ENCODE measurements at regions of chr16 and their contacts with region 1.

Region 1: DNA sequence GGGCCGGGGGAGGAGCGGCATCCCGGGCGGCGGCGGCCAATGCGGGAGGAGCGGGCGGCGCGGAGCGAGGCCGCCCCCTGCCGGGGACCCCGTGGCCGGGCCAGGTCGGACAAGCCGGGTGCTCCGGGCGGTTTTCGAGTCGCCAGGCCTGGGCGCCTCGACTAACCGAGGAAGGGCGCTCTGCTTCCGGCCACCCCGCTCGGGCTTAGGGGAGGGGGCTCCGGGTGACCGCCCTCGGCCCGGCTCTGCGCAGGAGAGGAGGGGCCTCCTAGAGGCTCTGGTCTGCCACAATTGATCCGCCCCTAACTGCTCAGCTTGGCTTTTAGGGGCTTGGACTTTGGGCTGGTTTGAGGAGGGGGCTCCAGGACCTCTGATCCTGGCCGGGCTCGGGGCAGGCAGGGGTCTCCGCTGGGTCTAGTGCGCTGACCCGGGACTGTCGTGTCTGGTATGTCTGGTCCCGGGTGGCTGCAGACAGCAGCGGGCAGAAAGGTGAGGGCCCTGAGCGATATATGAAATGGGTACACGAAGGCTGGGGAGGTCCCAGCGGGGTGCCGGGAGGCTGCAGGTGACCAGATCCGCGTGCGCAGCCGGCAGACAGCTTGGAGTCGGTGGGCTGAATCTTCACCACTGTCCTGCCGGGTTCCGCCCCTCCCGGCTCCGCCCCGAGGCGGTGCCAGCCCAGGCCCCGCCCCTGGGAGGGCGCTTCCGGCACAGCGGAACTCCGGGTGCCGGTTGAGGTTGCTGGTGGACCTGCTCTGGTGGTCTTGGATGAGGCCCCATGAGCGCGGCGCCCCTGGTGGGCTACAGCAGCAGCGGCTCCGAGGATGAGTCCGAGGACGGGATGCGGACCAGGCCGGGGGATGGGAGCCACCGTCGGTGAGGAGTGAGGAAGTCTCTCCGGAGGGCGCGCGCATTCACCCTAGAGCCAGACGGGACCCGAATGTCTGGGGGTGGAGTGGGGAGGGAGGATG is at the start of gene USB1:
- DNase-seq: peak; percentile 87
- H3K4me3 Mint-ChIP-seq: peak within 1 kb of the TSS; percentile 92
- H3K27ac Mint-ChIP-seq: peak within 1 kb of the TSS; percentile 94
- H3K4me1 Mint-ChIP-seq: peaks cover 58% of the 10 kb centered on the region
- H3K27me3 Mint-ChIP-seq: no peaks in the 10 kb centered on the region
- total RNA-seq, gene USB1: 48.4 to 54.2 TPM

Region 2: GRCh38 chr16:57899771-57900661 is 101.0 kb before region 1 on chr16:
- CTCF ChIA-PET with region 1: interaction called, 46 read pairs
- POLR2A ChIA-PET with region 1: interaction called, 5 read pairs
- DNase-seq: peak; percentile 81
- H3K4me3 Mint-ChIP-seq: no peak overlapping the region
- H3K27ac Mint-ChIP-seq: no peak overlapping the region
- H3K4me1 Mint-ChIP-seq: peaks cover 2% of the 10 kb centered on the region
- H3K27me3 Mint-ChIP-seq: peaks cover 19% of the 10 kb centered on the region

Region 3: GRCh38 chr16:57906382-57907316 is 94.3 kb before region 1 on chr16:
- CTCF ChIA-PET with region 1: interaction called, 22 read pairs
- POLR2A ChIA-PET with region 1: interaction called, 3 read pairs
- DNase-seq: peak; percentile 27
- H3K4me3 Mint-ChIP-seq: no peak overlapping the region
- H3K27ac Mint-ChIP-seq: no peak overlapping the region
- H3K4me1 Mint-ChIP-seq: no peaks in the 10 kb centered on the region
- H3K27me3 Mint-ChIP-seq: peaks cover 16% of the 10 kb centered on the region

Region 4: DNA sequence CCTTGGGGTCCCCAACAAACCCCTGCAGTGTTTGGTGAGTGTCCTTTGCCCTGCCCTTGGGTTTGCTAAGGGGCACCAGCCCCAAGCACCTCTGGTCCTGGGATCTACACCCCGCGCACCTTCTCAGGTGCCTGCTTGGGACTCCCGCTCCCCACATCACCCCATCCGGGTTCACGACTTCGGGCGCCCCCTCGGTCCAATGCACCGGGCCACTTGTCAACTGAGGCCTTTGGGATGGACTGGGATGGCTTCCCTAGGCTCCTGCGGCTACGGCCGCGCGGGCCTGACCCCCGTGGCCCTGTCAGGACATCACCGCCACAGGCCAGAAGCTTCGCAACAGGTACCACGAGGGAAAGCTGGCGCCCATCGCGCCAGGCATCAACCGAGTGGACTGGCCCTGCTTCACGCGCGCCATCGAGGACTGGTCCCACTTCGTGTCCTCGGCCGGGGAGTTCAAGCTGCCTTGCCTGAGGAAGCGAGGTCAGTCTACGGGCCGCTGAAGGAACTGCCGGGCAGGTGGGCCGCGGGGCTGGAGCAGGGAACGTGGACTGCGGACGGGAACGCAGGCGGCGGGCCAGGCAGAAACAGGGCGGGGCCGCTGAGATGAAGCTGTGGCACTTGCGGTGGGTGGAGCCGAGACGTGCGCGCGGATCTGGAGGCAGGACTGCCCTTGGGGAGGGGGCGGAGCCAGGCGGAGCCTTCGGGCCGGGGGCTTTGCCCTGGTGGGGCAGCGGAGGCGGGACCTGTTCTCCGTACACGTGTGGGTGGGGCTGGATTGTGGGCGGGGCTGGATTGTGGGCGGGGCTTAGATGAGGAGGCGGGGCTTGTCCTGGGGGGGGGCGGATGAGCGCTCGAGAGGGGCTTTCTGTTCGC is 16.4 kb before region 1 on chr16:
- CTCF ChIA-PET with region 1: interaction called, 8 read pairs
- POLR2A ChIA-PET with region 1: interaction called, 15 read pairs
- DNase-seq: peak; percentile 94
- H3K4me3 Mint-ChIP-seq: peak overlapping the region; percentile 81
- H3K27ac Mint-ChIP-seq: no peak overlapping the region
- H3K4me1 Mint-ChIP-seq: peaks cover 14% of the 10 kb centered on the region
- H3K27me3 Mint-ChIP-seq: peaks cover 9% of the 10 kb centered on the region

Region 5: GRCh38 chr16:58035356-58036170 is 34.6 kb after region 1 on chr16:
- CTCF ChIA-PET with region 1: no interaction called
- POLR2A ChIA-PET with region 1: no interaction called
- DNase-seq: no peak
- H3K4me3 Mint-ChIP-seq: no peak overlapping the region
- H3K27ac Mint-ChIP-seq: no peak overlapping the region
- H3K4me1 Mint-ChIP-seq: no peaks in the 10 kb centered on the region
- H3K27me3 Mint-ChIP-seq: no peaks in the 10 kb centered on the region

Region 6: DNA sequence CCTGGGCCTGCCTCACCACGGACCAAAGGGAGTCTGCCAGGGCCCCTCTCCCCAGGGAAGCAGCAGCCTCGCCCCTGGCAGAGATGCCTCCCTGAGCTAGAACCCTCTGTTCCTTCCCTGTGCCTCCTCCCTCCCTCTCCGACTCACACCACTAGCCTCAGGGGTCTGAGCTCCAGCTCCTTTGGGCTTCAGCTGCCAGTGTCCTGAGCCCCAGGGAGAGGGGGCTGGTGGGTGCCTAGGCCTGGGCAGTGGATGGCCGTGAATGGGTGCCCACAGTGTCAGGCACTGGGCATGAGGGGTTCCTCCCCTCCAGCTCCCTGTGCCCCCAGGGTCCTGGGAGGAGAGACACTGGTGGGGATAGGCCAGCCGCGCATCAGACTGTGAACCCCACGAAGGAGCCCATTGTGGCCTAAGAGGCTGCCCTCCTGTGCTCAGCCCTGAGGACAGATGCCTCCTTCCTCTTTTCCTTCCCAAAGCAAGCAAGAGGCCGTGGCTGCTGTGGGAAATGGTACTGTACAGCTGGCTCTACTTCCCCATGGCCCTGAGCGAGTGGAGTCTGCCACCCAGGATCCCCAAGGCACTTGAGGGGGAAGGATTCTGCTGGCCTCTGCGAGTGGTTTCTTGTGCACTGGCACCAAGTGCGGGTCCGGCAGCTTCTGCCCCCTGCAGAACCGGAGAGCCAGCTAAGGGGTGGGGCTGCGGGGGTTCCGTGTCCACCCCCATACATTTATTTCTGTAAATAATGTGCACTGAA is 45.3 kb after region 1 on chr16:
- CTCF ChIA-PET with region 1: no interaction called
- POLR2A ChIA-PET with region 1: no interaction called
- DNase-seq: no peak
- H3K4me3 Mint-ChIP-seq: no peak overlapping the region
- H3K27ac Mint-ChIP-seq: no peak overlapping the region
- H3K4me1 Mint-ChIP-seq: no peaks in the 10 kb centered on the region
- H3K27me3 Mint-ChIP-seq: no peaks in the 10 kb centered on the region